Motor neuron (in vitro differentiated cells): ENCODE measurements at regions of chr4 and their contacts with region 1.

Region 1: DNA sequence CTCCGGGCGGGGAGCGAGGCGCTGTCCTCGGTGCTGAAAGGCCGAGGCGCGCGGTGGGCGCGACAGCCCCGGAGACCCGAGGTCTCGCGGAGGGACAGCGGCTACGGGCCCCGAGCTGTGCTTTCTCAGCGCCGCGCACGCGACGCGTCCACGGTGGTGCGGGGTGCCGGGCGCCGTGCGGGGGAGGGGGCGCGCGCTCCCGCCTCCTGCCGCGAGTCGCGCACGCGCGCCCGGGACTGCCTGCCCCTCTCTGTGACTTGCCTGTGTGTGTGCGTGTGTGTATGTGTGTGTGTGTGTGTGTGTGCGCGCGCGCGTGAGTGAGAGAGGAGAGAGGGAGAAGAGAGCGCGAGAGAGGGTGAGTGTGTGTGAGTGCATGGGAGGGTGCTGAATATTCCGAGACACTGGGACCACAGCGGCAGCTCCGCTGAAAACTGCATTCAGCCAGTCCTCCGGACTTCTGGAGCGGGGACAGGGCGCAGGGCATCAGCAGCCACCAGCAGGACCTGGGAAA is at the start of gene GRIA2:
- ATAC-seq: peak; percentile 75 to 87 (median 83)
- H3K4me3 ChIP-seq: peak within 1 kb of the TSS; percentile 58 to 87 (median 62)
- H3K27ac ChIP-seq: peak within 1 kb of the TSS; percentile 53 to 77
- H3K4me1 ChIP-seq: peaks cover 0 to 3% of the 10 kb centered on the region in 2 donors
- total RNA-seq, gene GRIA2: 5.3 to 146 (median 46.0) TPM in 7 of 8 experiments, not detected in the other

Region 2: DNA sequence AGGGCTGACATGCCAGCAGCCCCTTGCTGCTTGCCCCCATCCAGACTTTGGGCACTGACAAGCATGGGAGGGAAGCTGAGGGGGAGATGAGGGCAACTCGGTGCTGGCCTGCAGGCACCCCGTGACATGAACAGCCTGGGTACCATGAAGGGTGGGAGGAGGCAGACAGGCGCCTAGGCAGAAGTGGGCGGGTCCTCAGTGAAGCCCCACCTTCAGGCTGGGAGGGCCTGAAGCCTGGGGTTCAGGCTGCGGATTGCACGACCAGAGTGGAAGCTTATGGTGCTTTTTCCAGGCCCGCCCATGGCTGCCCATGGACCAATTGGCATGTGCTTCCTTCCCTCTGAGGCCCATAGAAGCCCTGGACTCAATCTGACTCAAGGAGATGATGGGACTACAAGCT is 354.2 kb after region 1 on chr4:
- in situ Hi-C with region 1: loop called in 1 of 9 experiments (anchors 25 kb)
- ATAC-seq: no peak
- H3K4me3 ChIP-seq: no peak overlapping the region
- H3K27ac ChIP-seq: no peak overlapping the region
- H3K4me1 ChIP-seq: no peaks in the 10 kb centered on the region

Region 3: GRCh38 chr4:157792716-157793115 is 572.3 kb after region 1 on chr4:
- in situ Hi-C with region 1: loop called in 1 of 9 experiments (anchors 25 kb)
- ATAC-seq: no peak
- H3K4me3 ChIP-seq: no peak overlapping the region
- H3K27ac ChIP-seq: no peak overlapping the region
- H3K4me1 ChIP-seq: no peaks in the 10 kb centered on the region

Region 4: DNA sequence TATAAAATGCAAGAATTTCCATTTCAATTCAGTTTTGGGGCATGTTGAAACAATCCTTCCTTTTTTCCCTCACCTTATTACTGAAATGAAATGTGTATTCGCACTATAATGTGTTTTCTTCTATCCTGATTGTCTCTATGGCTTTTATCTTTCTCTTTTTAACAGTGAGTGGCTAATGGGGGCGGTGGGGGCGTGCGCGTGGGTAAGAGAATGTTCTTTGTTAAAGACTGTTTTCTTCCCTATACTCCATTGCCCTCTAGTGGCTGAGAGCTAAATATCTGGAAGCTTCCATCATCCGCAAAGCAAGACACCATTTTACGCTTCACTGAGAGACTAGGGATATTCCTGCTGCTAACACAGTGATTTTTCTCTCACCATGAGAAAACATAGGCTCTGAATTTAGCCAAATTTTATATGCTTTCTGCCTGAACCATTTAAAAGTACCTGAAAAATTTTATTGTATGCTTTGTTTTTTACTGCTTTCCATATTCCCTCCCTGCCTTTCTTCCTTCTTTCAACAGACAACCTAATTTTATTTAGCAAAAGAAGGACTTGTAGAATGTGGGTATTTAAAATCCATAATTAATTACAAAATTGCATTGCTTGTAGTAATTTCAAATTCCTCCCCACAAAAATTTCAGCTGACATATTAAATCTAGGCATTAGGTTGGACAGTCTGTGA is 758.4 kb after region 1 on chr4:
- in situ Hi-C with region 1: loop called in 5 of 9 experiments (anchors 25 kb)
- ATAC-seq: peak; percentile 82 to 92 (median 90)
- H3K4me3 ChIP-seq: peak overlapping the region in 1 of 5 donors; percentile 8
- H3K27ac ChIP-seq: no peak overlapping the region
- H3K4me1 ChIP-seq: peaks cover 0 to 9% of the 10 kb centered on the region in 2 donors

Region 5: DNA sequence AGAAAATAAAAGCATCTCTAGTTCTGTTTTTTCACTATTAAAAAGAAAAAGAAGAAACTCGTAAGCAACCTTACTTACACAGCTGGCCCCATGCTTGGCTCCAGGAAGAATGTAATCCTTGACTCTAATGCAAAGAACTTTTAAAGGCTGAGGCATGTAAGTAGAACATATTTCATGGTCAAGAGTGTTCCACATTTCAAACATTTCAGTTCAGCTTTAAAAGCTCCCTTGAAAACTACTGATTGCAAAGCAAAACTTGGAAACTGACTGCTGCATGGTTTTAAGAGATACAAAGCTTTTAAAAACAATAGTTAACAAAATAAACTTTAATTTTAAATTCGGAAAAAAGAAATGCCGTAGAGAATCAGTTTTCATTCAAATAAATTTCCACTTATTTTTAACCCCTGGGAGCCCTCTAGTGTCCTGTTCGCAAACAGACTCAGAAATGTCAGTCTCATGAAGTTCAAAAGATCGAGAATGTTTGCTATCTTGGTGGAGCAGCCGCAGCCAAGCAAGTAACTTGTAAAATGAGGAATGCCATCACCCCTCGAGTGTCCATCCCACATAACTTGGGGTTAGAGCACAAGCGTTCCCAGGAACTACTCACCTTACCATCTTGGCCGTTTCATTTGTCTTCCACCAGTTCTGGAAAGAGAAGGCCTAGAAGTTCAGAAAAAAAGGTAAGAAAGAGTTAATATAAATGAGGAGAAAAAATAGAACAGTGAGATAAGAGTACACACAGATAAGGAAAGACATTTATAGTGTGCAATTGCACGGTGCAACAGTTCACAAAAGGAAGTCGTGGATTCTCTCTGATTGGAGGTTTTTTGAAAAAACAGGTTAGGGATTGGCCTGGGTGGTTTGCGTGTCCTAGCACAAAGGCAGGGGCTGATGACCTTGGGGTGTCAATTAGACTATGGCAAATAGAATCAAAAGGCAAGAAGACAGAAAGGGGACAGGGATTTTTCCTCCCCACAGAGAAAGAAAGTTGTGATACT is 952.1 kb after region 1 on chr4 and contains the start of gene GASK1B:
- in situ Hi-C with region 1: loop called in 1 of 9 experiments (anchors 25 kb)
- ATAC-seq: peak in 4 of 8 experiments; percentile 21 to 76 (median 58)
- H3K4me3 ChIP-seq: peak within 1 kb of the TSS in 1 of 5 donors; percentile 26
- H3K27ac ChIP-seq: no peak within 1 kb of the TSS
- H3K4me1 ChIP-seq: peaks cover 0 to 2% of the 10 kb centered on the region in 2 donors
- total RNA-seq, gene GASK1B: 0.41 to 43.9 (median 1.3) TPM